ENCODE measurements at regions of chr17 and their contacts with region 1.

Region 1: DNA sequence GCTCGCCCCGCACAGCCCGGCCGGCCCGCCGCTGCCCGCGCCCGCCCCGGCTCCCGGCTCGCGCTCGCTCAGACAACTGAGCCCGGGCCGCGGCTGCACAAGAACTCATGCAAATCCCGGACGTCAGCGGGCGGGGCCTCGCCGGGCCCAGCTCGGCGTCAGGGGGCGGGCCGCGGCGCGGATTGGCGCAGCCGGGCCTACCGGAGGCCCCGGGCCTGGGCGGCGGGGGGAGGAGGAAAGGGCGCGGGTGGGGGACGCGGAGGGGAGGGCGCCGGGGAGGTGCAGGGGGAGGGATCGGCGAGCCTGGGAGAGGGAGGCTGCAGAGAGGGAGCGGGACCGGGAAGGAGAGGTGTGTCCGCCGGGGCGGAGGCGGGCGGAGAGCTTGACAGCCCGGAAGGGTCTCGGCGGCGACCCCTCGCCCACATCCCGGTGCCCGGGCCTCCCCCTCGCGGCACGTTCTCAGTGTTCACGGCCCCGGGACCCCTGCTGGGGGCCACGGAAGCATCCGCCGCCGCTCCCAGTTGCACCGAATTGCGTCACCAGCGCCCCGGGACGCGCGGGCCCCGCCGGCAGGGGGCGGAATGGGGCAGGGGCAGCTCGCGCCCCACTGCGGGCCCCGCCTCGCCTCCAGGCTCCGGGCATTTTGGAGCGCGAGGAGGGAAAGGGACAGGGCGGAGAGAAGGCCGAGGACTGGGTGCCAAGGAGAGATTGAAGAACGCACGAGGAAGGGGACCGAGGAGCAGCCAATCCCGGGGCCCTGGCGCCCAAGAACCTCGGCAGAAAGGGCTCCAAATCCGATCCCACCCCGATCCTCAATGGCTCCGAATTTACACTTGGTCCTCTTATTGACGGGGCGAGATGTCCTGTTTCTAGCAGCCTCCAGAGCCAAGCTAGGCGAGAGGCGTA is at the start of gene CBX4:
- DNase-seq: peak in 1 of 2 donors; percentile 95
- H3K4me3 ChIP-seq: peak within 1 kb of the TSS; percentile 72 to 75
- H3K27ac ChIP-seq: peak within 1 kb of the TSS; percentile 93
- H3K4me1 ChIP-seq: peaks cover 76% of the 10 kb centered on the region
- H3K27me3 ChIP-seq: peaks cover 12% of the 10 kb centered on the region
- CTCF ChIP-seq: peak in 2 of 3 experiments; percentile 39 to 42
- POLR2A ChIP-seq: peak in 1 of 2 donors; percentile 77
- total RNA-seq, gene CBX4: 13.0 TPM

Region 2: DNA sequence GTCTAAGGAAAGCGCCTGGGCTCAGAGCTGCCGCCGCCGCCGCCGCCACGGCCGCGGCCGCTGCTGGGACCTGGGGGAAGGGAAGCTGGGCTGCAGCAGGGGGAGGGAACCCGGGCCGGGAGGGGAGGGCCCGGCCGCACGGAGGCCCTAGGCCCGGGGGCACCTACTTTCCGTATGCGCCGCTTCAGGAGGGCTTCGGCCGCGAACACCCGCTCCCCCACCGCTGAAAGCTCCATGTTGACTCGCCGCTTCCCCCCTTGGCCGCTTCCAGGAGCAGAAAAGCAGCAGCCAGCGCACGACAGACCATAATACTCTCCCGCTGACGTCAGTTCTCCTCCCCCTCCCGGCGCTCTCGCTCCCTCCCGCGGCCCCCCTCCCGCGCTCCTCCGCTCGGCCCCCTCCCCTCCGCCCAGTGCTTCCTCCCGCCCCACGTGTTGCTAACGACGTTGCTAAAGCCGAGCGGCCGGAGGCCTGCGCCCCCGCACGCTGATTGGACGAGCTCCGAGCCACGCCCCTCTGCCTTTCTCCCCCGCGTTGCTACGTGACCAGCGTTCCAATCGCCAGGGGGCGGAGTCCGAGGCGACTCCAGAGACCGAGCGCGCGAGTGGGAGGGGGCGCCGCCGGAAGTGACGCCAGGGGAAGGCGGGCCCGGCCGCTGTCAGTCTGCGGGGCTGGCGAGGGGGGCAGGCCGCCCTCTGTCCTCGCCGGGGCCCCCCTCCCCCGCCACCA is 42.7 kb before region 1 on chr17 and contains the start of gene CBX8:
- intact Hi-C with region 1: loop called (anchors 2 kb)
- DNase-seq: peak; percentile 98
- H3K4me3 ChIP-seq: peak within 1 kb of the TSS; percentile 62 to 63
- H3K27ac ChIP-seq: peak within 1 kb of the TSS; percentile 75
- H3K4me1 ChIP-seq: peaks cover 68% of the 10 kb centered on the region
- H3K27me3 ChIP-seq: peaks cover 34% of the 10 kb centered on the region
- CTCF ChIP-seq: peak in 1 of 3 experiments; percentile 19
- POLR2A ChIP-seq: no peak
- total RNA-seq, gene CBX8: 0.98 TPM